A673 (cell line): ENCODE measurements at regions of chr12 and their contacts with region 1.

Region 1: DNA sequence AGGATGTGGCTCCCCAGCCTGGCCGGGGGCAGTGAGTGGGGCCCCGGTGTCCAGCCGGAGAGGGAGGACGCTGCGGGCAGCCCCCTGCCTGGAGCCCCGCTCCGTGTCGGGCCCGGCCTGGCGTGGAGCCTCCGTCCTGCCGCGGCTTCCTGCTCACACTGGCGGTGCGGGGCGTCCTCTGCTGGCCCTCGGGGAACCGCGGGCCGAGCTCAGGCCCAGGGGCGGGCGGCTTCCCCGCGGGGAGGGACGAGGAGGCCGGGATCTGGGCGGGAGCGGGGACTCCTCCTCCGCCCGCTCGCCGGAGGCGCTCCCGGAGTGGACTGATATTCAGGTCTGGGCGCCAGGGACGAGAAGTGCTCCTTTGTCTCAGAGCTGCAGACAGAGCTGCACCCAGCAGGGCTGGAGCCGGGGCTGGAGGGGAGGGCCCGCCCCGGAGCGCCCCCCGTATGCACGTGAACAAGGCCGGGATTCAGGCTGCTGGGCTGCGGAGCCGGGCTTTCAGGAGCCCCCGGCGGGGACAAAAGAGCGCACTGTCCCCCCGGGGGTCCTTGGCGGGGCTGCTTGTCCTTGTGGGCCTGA is 2.2 kb downstream of the MMP17 start:
- DNase-seq: peak; percentile 83
- H3K4me3 ChIP-seq: peak overlapping the region; percentile 54
- H3K27ac ChIP-seq: peak overlapping the region; percentile 82
- H3K4me1 ChIP-seq: peaks cover 28% of the 10 kb centered on the region
- H3K27me3 ChIP-seq: no peaks in the 10 kb centered on the region
- CTCF ChIP-seq: peak; percentile 55

Region 2: DNA sequence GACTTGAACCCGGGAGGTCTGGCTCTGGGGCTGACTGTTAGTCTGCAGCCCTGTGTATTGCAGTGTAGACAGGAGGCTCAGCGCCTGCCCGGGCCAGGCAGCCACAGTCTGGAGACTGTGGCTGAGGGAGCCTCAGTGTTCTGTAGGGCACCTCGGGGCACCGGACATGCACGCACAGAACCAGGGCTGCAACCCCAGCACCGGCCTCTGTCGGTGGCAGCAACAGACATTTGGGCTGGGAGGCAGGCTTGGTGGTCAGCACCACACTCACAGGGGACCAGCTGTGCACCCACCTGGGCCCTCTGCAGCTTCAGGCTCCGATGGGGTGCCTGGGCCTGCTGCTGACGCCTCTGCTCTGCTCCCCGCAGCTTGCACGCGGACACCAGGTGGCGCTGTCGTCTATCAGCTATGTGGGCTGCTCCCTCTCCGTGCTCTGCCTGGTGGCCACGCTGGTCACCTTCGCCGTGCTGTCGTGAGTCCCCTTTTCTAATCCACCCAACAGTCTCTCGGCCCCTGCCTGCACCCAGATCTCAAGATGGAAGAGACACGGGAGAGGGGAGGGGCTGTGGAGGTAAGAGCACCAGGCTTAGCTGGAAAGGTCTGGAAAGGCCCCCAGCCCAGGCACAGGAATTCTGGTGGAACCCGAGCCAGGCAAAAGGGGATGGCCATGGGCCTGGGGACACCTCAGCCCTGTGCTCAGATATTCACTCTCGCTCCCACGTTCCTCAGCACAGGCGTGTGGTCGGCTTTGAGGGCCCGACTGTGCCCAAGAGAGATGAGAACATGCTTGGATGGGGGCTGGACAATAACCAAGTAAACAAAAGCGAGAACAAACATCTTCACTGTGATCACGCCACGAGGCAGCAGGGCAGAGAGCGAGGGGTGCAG is 725.7 kb before region 1 on chr12:
- CTCF ChIA-PET with region 1: no interaction called
- POLR2A ChIA-PET with region 1: no interaction called
- intact Hi-C with region 1: loop called (anchors 10 kb)
- DNase-seq: peak; percentile 83
- H3K4me3 ChIP-seq: no peak overlapping the region
- H3K27ac ChIP-seq: no peak overlapping the region
- H3K4me1 ChIP-seq: no peaks in the 10 kb centered on the region
- H3K27me3 ChIP-seq: no peaks in the 10 kb centered on the region
- CTCF ChIP-seq: peak; percentile 95

Region 3: GRCh38 chr12:131608740-131609690 is 221.4 kb before region 1 on chr12:
- CTCF ChIA-PET with region 1: no interaction called
- POLR2A ChIA-PET with region 1: no interaction called
- intact Hi-C with region 1: loop called (anchors 5 kb)
- DNase-seq: peak; percentile 69
- H3K4me3 ChIP-seq: no peak overlapping the region
- H3K27ac ChIP-seq: no peak overlapping the region
- H3K4me1 ChIP-seq: no peaks in the 10 kb centered on the region
- H3K27me3 ChIP-seq: peaks cover 42% of the 10 kb centered on the region
- CTCF ChIP-seq: peak; percentile 86

Region 4: GRCh38 chr12:131755305-131756113 is 74.9 kb before region 1 on chr12:
- CTCF ChIA-PET with region 1: no interaction called
- POLR2A ChIA-PET with region 1: no interaction called
- intact Hi-C with region 1: loop called (anchors 5 kb)
- DNase-seq: peak; percentile 68
- H3K4me3 ChIP-seq: no peak overlapping the region
- H3K27ac ChIP-seq: no peak overlapping the region
- H3K4me1 ChIP-seq: no peaks in the 10 kb centered on the region
- H3K27me3 ChIP-seq: no peaks in the 10 kb centered on the region
- CTCF ChIP-seq: peak; percentile 71

Region 5: DNA sequence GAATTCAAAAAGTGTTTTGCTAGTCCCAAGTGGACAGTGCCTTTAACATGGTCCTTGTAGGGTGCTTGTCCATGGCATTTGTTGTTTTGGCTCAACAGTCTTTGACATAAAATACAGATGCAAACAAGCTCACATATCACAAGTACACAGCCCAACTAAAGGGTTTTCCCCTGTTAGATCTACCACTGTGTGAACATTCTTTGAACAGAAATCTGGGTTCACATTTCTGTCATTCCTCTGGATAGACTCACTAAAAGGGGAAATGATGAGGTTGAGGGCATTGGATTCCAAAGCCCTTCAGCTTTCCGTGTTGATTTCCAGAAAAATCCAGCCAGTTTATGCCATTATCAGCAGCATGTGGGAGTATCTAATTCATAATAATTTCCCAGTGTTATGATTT is 173.4 kb after region 1 on chr12:
- CTCF ChIA-PET with region 1: no interaction called
- POLR2A ChIA-PET with region 1: no interaction called
- intact Hi-C with region 1: loop called (anchors 5 kb)
- DNase-seq: no peak
- H3K4me3 ChIP-seq: no peak overlapping the region
- H3K27ac ChIP-seq: no peak overlapping the region
- H3K4me1 ChIP-seq: no peaks in the 10 kb centered on the region
- H3K27me3 ChIP-seq: no peaks in the 10 kb centered on the region
- CTCF ChIP-seq: no peak

Region 6: DNA sequence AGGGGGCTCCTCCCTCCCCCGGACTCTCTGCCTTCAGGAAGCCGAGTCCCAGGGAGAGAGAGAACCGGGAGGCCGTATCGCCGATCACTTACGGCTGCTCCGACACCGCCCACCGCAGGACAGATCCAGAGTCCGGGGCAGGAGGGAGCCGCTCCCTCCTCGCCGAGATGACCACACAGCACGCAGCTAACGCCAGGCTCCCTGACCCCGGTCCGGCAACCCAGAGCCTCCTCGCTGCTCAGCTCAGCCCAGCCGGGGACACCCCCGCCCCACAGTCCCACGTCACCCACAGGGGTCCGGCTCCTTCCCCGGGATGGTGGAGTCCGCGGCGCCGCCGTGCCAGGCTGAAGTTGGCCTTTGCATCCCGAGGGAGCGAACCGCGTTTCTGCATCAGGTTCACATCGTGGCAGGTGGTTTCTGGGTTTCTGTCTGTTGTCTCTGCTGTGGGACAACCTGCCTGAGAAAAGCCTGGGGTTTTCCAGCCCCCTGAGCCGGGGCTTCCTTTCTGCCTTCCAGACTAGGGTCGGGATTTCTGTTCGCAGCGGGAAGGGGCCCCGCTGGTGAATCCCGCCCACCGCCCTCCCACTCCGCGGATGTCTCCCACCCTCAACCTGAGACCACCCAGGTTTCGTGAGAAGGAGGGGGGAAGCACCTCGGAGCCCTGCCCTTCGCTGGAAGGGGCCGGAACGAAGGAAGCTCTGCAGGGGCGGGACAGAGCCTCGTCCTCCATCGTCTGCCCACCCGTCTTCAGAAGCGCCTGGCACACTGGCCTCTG is 375.0 kb after region 1 on chr12:
- CTCF ChIA-PET with region 1: no interaction called
- POLR2A ChIA-PET with region 1: no interaction called
- intact Hi-C with region 1: no loop called
- DNase-seq: no peak
- H3K4me3 ChIP-seq: peak overlapping the region; percentile 25
- H3K27ac ChIP-seq: no peak overlapping the region
- H3K4me1 ChIP-seq: peaks cover 10% of the 10 kb centered on the region
- H3K27me3 ChIP-seq: peaks cover 23% of the 10 kb centered on the region
- CTCF ChIP-seq: no peak